ENCODE measurements at regions of chr10 and their contacts with region 1.

Region 1: GRCh38 chr10:116385994-116386809 is 41.4 kb upstream of the PNLIPRP3 start:
- DNase-seq: no peak
- ATAC-seq: no peak

Region 2: DNA sequence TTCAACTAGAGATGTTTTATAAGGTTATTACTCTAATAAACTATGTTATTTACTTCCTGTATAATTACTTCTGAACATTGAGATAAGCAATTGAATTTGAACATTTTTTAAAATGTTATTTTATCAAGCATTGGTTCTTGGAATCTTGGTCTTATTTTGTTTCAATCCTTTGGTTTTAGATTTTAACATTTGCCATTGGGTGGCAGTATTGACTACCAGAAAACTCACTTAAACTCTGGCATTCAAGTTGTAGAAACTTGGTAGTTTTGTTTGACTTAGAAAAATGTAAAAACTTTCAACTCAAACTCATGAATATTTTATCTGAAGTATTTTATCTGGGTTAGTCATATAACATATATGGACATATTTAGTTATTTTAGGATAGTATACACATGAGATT is 1244.9 kb before region 1 on chr10:
- intact Hi-C with region 1: loop called in 1 of 2 experiments (anchors 10 kb)
- DNase-seq: no peak
- ATAC-seq: no peak

Region 3: GRCh38 chr10:115355162-115355760 is 1030.9 kb before region 1 on chr10:
- intact Hi-C with region 1: loop called in 1 of 2 experiments (anchors 5 kb)
- DNase-seq: no peak
- ATAC-seq: peak; percentile 38 to 58

Region 4: DNA sequence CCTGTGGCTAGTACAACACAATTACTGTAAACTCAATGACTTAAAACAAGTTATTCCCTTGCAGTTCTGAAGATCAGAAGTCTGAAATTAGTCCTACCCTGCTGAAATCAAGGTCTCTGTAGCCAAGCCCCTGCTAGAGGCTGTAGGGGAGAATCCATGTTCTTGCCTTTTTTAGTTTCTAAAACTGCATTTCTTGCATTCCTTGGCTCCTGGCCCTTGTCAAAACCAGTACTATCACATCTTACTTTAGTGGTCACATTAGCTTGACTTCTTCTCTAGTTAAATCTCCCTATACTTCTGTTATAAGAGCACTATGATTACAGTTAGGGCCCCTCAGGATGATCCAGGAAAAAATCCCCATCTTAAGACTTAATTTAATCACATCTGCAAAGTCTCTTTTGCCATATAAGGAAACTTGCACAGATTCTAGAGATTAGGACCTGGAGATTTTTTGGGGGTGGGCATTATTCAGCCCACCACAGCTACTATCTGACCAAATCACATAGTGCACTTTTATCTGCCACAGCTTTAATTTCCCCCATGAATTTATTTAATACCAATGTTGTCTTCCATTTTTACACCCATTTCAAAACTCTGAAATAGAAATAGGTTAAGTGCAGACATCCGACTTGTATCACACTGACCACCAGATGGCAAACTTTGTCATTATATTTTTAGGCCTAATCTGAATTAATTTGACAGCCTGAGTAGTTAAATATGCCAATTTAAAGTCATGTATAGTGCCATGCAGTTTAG is 680.0 kb before region 1 on chr10:
- intact Hi-C with region 1: loop called in 1 of 2 experiments (anchors 5 kb)
- DNase-seq: no peak
- ATAC-seq: no peak

Region 5: GRCh38 chr10:116444527-116445142 is 58.4 kb after region 1 on chr10:
- intact Hi-C with region 1: no loop called
- DNase-seq: no peak
- ATAC-seq: no peak

Region 6: DNA sequence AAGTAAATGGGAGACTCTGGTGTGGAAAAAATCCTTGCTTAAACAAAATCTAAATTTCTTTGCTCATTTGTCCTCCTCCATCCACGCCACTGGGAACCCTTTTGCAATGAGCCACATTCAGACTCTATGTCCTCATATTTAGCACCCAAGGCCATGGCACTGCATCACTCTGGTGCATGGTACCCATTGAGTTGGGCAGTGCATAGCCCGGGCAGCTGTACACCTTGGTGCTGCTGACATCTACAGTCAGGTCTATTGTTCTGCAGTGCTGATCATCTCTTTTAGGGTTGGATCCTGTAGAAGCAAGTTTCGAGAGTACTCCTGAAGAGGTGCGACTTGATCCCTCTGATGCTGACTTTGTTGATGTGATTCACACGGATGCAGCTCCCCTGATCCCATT is 211.3 kb after region 1 on chr10:
- intact Hi-C with region 1: no loop called
- DNase-seq: no peak
- ATAC-seq: no peak

Measured in left cardiac atrium (tissue), 4 donors.